Activated B cell treated with CpG ODN at 0.5 μM for 24 hours (primary cell): ENCODE measurements at regions of chr1 and their contacts with region 1.

Region 1: DNA sequence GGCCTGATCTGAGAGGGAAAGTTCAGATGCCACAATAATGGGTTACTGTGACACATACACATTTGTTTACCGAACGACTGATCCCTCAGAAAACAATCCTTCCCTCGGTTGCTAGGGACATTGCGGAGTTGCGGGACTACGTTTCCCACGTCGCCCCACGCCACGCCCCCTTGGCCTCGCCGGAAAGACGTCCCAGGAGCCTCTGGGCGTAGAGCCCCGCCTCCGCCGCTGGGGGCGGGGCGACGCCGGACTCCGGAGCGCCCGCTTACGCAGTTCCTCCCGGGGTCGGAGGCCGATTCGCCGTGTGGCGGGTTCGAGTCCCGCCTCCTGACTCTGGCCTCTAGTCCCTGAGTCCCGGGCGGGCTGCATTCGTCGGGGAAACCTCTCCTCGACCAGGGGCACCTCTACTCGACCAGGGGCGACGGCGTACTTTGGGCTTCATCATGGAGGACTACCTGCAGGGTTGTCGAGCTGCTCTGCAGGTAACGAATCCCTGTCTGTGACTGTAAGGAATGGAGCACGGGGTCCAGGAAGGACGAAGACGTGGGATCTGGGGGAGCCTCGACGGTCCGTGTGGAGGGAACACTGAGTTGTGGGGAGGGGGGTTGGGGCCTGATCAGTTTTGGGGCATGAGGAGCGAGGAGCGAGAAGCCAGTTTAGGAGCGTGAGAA is at the start of gene PRUNE1:
- DNase-seq: peak; percentile 91
- ATAC-seq: peak; percentile 94
- H3K4me3 Mint-ChIP-seq: peak within 1 kb of the TSS; percentile 98
- H3K27ac Mint-ChIP-seq: peak within 1 kb of the TSS; percentile 93
- H3K4me1 Mint-ChIP-seq: peaks cover 66% of the 10 kb centered on the region
- H3K27me3 Mint-ChIP-seq: no peaks in the 10 kb centered on the region
- CTCF ChIP-seq: no peak
- total RNA-seq, gene PRUNE1: 12.9 and 14.2 TPM in 2 replicates

Region 2: DNA sequence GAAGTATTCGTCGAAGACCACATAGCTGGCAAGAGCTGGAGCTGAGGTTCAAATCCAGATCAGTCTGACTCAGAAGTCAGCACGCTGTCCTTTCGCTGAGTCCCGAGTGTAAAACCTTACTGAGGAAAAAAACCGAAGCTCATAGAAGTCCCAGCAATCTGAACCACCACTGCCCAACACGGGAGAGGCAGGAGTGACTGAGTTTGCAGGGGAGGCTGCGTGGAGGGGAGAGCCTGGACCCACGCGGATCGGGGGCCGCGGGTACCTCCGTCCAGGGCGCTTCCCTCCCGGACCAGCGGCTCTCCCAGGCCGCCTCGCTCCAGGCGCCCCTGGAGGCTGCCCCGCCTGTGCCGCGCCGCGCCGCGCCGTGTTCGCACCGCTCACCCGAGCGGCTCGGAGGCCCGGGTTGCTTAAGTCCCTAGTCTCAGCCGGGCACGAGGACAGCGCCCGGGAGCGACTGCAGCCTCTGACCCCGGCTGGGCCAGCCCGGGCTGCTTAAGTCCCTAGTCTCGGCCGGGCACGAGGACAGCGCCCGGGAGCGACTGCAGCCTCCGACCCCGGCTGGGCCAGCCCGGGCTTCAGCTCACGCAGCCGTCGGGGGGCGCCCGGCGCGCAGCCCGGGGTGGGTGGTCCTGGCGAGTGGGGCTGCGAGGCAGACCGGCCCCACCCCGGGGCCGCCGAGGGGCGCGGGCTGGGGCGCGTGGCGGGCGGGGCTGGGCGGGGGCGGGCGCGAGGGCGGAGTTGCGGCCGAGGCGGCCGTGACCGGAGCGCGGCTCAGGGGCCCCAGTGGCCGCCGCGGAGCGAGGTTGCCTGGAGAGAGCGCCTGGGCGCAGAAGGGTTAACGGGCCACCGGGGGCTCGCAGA is 459.5 kb before region 1 on chr1 and contains the start of gene ADAMTSL4:
- CTCF ChIA-PET with region 1: no interaction called
- POLR2A ChIA-PET with region 1: no interaction called
- intact Hi-C with region 1: no loop called
- DNase-seq: peak; percentile 57
- ATAC-seq: peak; percentile 76
- H3K4me3 Mint-ChIP-seq: peak within 1 kb of the TSS; percentile 81
- H3K27ac Mint-ChIP-seq: no peak within 1 kb of the TSS
- H3K4me1 Mint-ChIP-seq: peaks cover 24% of the 10 kb centered on the region
- H3K27me3 Mint-ChIP-seq: peaks cover 21% of the 10 kb centered on the region
- CTCF ChIP-seq: no peak
- total RNA-seq, gene ADAMTSL4: 0.11 TPM in 1 of 2 replicates, not detected in the other

Region 3: GRCh38 chr1:150876119-150876454 is 132.2 kb before region 1 on chr1:
- CTCF ChIA-PET with region 1: no interaction called
- POLR2A ChIA-PET with region 1: no interaction called
- intact Hi-C with region 1: loop called (anchors 1 kb)
- DNase-seq: no peak
- ATAC-seq: peak; percentile 32
- H3K4me3 Mint-ChIP-seq: peak overlapping the region; percentile 92
- H3K27ac Mint-ChIP-seq: peak overlapping the region; percentile 88
- H3K4me1 Mint-ChIP-seq: peaks cover 31% of the 10 kb centered on the region
- H3K27me3 Mint-ChIP-seq: no peaks in the 10 kb centered on the region
- CTCF ChIP-seq: no peak

Region 4: DNA sequence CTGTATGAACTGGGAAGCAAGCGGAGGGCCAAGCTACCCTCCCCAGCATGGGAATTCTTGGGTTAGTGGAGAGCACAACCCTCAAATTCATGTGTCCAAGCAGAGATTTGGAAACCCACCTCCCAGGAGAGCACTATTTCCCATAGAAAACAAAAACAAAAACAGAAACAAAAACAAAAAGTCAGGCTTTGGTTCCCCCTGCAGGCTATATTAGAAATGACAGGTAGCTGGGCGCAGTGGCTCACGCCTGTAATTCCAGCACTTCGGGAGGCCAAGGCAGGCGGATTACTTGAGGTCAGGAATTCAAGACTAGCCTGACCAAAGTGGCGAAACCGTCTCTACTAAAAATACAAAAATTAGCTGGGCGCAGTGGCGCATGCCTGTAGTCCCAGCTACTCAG is 12.4 kb before region 1 on chr1:
- CTCF ChIA-PET with region 1: interaction called, 19 read pairs
- POLR2A ChIA-PET with region 1: interaction called, 11 read pairs
- intact Hi-C with region 1: no loop called
- DNase-seq: no peak
- ATAC-seq: peak; percentile 34
- H3K4me3 Mint-ChIP-seq: no peak overlapping the region
- H3K27ac Mint-ChIP-seq: no peak overlapping the region
- H3K4me1 Mint-ChIP-seq: no peaks in the 10 kb centered on the region
- H3K27me3 Mint-ChIP-seq: no peaks in the 10 kb centered on the region
- CTCF ChIP-seq: no peak

Region 5: GRCh38 chr1:151059078-151059907 is 51.0 kb after region 1 on chr1 and contains the start of gene CDC42SE1:
- CTCF ChIA-PET with region 1: interaction called, 3 read pairs
- POLR2A ChIA-PET with region 1: interaction called, 4 read pairs
- intact Hi-C with region 1: loop called (anchors 2 kb)
- DNase-seq: peak; percentile 82
- ATAC-seq: peak; percentile 88
- H3K4me3 Mint-ChIP-seq: peak within 1 kb of the TSS; percentile 98
- H3K27ac Mint-ChIP-seq: peak within 1 kb of the TSS; percentile 93
- H3K4me1 Mint-ChIP-seq: peaks cover 54% of the 10 kb centered on the region
- H3K27me3 Mint-ChIP-seq: no peaks in the 10 kb centered on the region
- CTCF ChIP-seq: no peak
- total RNA-seq, gene CDC42SE1: 139 and 148 TPM in 2 replicates

Region 6: GRCh38 chr1:151281969-151282882 is 273.9 kb after region 1 on chr1 and contains the start of gene ZNF687:
- CTCF ChIA-PET with region 1: no interaction called
- POLR2A ChIA-PET with region 1: no interaction called
- intact Hi-C with region 1: loop called (anchors 2 kb)
- DNase-seq: peak; percentile 96
- ATAC-seq: peak; percentile 88
- H3K4me3 Mint-ChIP-seq: peak within 1 kb of the TSS; percentile 99
- H3K27ac Mint-ChIP-seq: peak within 1 kb of the TSS; percentile 99
- H3K4me1 Mint-ChIP-seq: peaks cover 54% of the 10 kb centered on the region
- H3K27me3 Mint-ChIP-seq: no peaks in the 10 kb centered on the region
- CTCF ChIP-seq: no peak
- total RNA-seq, gene ZNF687: 38.8 and 40.3 TPM in 2 replicates